ENCODE measurements at regions of chr16 and their contacts with region 1.

Region 1: GRCh38 chr16:27318392-27319226 is 4.8 kb downstream of the IL4R start:
- DNase-seq: peak; percentile 89
- H3K4me3 Mint-ChIP-seq: peak overlapping the region; percentile 100
- H3K27ac Mint-ChIP-seq: peak overlapping the region; percentile 96
- H3K4me1 Mint-ChIP-seq: peaks cover 62% of the 10 kb centered on the region
- H3K27me3 Mint-ChIP-seq: no peaks in the 10 kb centered on the region

Region 2: DNA sequence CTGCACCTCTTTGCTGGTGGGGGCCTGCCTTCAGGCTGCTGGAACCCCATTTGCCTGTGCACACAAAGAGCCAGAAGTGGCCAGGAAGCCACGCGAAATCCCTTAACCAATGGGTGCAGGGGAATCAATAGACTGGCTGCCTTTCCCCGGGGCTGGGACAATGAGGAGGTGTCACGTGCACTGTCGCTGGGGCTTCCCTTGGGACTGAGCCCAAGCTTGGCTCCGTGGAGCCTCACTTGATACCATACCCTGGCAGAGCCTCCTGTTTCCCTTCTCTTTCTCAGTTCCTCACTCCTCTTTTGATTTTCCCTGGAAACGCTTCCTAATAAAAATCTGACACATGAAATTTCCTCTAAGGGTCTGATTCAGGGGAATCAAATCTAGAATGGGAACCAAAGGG is 290.6 kb before region 1 on chr16:
- intact Hi-C with region 1: no loop called
- DNase-seq: no peak
- H3K4me3 Mint-ChIP-seq: no peak overlapping the region
- H3K27ac Mint-ChIP-seq: no peak overlapping the region
- H3K4me1 Mint-ChIP-seq: no peaks in the 10 kb centered on the region
- H3K27me3 Mint-ChIP-seq: no peaks in the 10 kb centered on the region

Region 3: DNA sequence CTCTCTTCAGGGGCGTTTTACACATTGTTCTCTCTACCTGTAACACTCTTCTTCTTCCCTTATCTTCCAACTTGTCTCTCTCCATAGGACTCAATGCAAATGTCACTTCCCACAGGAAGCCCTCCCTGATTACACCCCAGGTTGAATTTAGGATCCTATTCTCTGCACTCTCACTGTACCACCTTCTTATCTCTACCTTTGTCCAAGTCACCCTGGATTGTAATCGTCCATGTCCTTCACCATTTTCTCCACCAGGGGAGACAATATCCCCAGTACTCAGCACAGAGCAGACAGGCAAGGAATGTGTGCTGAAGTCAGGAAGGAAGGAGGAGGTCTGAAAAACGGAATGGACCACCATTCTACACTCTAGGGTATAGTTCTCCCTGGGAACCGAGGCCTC is 237.7 kb before region 1 on chr16:
- intact Hi-C with region 1: no loop called
- DNase-seq: no peak
- H3K4me3 Mint-ChIP-seq: no peak overlapping the region
- H3K27ac Mint-ChIP-seq: no peak overlapping the region
- H3K4me1 Mint-ChIP-seq: no peaks in the 10 kb centered on the region
- H3K27me3 Mint-ChIP-seq: peaks cover 23% of the 10 kb centered on the region

Region 4: GRCh38 chr16:27169511-27170071 is 149.0 kb before region 1 on chr16:
- intact Hi-C with region 1: loop called (anchors 1 kb)
- DNase-seq: peak; percentile 88
- H3K4me3 Mint-ChIP-seq: peak overlapping the region; percentile 52
- H3K27ac Mint-ChIP-seq: peak overlapping the region; percentile 74
- H3K4me1 Mint-ChIP-seq: peaks cover 52% of the 10 kb centered on the region
- H3K27me3 Mint-ChIP-seq: peaks cover 2% of the 10 kb centered on the region

Region 5: DNA sequence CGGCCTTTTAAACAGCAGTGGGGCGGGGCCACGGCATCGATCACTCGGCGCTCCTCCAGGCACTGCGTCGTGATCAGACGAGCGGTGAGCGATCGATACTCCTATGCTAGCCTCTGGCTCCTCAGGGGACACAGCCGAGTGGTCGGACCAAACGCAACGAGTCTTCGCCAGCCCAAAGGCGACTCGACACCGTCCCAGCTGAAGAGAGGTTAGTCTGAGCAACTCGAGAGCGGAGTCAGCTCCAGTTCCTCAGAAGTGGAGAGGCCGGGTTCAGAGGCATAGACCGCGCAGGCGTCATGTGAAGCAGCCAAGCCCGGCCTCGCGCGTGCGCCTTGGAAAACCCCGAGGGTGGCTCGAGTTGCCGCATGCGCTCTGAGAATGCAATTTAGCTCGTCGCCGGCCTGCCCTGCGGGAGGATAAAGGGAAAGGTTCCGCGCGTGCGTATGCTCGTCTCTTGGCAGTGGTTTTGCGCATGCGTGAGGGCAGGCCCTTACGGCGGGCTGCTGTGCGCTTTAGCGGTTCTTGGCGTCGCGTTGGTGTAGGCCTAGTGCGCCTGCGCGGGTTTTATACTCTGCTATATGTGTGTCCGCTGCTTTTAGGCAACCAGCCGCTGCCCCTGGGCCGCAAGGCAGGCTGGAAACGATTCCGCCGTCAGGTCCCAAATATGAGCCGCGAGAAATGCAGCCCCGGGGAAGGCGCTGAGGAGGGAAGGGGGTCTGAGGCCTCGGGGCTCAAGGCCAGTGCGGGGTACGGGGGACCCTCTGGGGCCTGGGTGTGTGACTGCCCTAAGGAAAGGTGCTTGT is 115.0 kb before region 1 on chr16 and contains the start of gene KDM8:
- intact Hi-C with region 1: loop called (anchors 1 kb)
- DNase-seq: peak; percentile 100
- H3K4me3 Mint-ChIP-seq: peak within 1 kb of the TSS; percentile 93
- H3K27ac Mint-ChIP-seq: peak within 1 kb of the TSS; percentile 100
- H3K4me1 Mint-ChIP-seq: peaks cover 52% of the 10 kb centered on the region
- H3K27me3 Mint-ChIP-seq: peaks cover 2% of the 10 kb centered on the region
- total RNA-seq, gene KDM8: 11.0 and 13.6 TPM in 2 replicates

Region 6: GRCh38 chr16:27242868-27243590 is 75.6 kb before region 1 on chr16:
- intact Hi-C with region 1: no loop called
- DNase-seq: peak; percentile 78
- H3K4me3 Mint-ChIP-seq: peak overlapping the region; percentile 61
- H3K27ac Mint-ChIP-seq: peak overlapping the region; percentile 82
- H3K4me1 Mint-ChIP-seq: peaks cover 81% of the 10 kb centered on the region
- H3K27me3 Mint-ChIP-seq: no peaks in the 10 kb centered on the region

Region 7: GRCh38 chr16:27253526-27253930 is 65.1 kb before region 1 on chr16:
- intact Hi-C with region 1: loop called (anchors 1 kb)
- DNase-seq: no peak
- H3K4me3 Mint-ChIP-seq: peak overlapping the region; percentile 74
- H3K27ac Mint-ChIP-seq: peak overlapping the region; percentile 96
- H3K4me1 Mint-ChIP-seq: peaks cover 83% of the 10 kb centered on the region
- H3K27me3 Mint-ChIP-seq: no peaks in the 10 kb centered on the region

Region 8: DNA sequence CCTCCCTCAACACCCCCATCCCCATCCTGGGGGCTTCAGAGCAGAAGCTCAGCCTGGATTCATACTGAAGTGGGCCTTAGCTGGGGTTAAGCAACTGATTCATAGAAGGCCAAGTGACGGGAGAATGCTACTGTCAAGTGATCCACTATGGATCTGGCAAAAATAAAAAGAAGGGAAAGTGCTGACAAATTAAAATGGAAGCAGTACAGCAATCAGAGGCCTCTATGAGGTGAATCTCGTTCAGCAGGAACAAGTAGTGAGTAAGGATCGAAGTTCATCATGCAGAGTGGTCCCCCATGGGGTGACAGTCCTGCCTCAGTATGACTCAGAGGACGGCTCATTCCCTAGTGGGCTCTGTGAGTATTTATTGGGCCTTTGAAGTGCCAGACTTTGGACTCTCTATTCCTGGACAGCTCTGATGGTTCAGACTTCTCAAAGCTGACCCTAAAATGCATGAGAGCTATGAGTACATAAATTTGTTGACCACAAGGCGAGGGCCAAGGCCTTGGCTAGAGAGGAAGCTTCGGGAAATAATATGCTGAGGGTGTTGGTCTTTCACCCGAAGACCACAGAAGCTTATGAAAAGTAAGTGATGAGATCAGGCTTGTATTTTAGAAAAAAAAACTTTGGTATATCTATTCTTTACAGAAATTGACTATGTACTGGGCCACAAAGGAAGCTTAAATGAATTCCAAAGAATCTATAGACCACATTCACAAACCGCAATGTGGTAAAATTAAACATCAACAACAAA is 44.8 kb before region 1 on chr16:
- intact Hi-C with region 1: loop called (anchors 1 kb)
- DNase-seq: peak; percentile 83
- H3K4me3 Mint-ChIP-seq: peak overlapping the region; percentile 68
- H3K27ac Mint-ChIP-seq: peak overlapping the region; percentile 94
- H3K4me1 Mint-ChIP-seq: peaks cover 59% of the 10 kb centered on the region
- H3K27me3 Mint-ChIP-seq: no peaks in the 10 kb centered on the region

Region 9: DNA sequence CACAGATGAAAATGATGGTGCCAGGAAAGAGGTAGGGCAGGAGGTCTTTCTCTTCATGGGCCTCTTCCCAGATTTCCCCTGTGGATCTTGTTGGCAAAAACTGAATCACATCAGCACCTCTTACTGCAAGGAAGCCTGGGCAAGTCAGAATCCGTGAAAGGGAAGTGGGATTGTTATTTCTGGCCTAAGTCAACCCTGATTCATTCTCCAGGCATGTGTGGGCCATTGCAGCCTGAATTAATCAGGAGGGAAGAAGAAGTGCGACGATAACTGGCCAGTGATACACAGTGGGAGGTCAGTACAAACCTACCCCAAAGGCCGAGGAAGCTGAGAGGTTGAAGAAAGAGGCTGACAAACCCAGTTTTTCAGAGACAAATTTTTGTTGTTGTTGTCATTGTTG is 32.2 kb before region 1 on chr16:
- intact Hi-C with region 1: loop called (anchors 1 kb)
- DNase-seq: no peak
- H3K4me3 Mint-ChIP-seq: no peak overlapping the region
- H3K27ac Mint-ChIP-seq: peak overlapping the region; percentile 84
- H3K4me1 Mint-ChIP-seq: peaks cover 77% of the 10 kb centered on the region
- H3K27me3 Mint-ChIP-seq: no peaks in the 10 kb centered on the region

Region 10: DNA sequence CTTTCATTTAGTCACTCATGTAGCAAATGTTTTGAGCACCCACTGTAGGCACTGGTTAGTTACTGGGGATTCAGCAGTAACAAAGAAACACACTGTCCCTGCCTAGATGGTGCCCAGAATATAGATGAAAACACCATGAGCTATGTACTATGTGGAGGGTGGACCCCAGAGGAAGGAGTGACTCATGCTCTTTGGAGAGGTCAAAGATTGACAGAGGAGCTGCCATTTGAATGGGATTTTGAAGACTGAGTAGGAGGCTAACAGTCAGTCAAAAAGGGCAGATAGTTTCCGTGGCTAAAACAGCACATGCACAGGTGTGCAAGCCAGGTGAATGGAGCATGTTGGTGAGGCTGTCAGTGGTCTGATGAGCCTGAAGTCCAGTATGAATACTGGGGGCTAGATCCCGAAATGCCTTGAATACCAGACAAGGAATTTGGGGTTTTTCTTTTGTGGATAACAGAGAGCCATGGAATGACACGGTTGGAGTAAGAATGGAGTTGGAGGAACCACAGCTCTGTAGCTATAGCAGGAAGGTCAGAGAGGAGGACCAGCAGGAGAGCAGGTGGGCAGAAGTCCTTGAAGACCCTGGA is 89.5 kb after region 1 on chr16:
- intact Hi-C with region 1: loop called (anchors 1 kb)
- DNase-seq: peak; percentile 79
- H3K4me3 Mint-ChIP-seq: peak overlapping the region; percentile 100
- H3K27ac Mint-ChIP-seq: peak overlapping the region; percentile 98
- H3K4me1 Mint-ChIP-seq: peaks cover 62% of the 10 kb centered on the region
- H3K27me3 Mint-ChIP-seq: no peaks in the 10 kb centered on the region

Measured in activated CD4-positive, alpha-beta T cell treated with anti-CD3 and anti-CD28 coated beads, Interleukin-2, amount 10 ng/mL, durations not matched to agents 24 days and 14 days (primary cell).